Activated CD4-positive, alpha-beta T cell treated with anti-CD3 and anti-CD28 coated beads, Interleukin-2, amount 10 ng/mL, durations not matched to agents 7 days and 5 days (primary cell): ENCODE measurements at regions of chr19 and their contacts with region 1.

Region 1: GRCh38 chr19:41353466-41354342 is at the start of gene TGFB1:
- DNase-seq: peak; percentile 92
- H3K4me3 Mint-ChIP-seq: peak within 1 kb of the TSS; percentile 99
- H3K27ac Mint-ChIP-seq: peak within 1 kb of the TSS; percentile 95
- H3K4me1 Mint-ChIP-seq: peaks cover 64% of the 10 kb centered on the region
- H3K27me3 Mint-ChIP-seq: no peaks in the 10 kb centered on the region
- total RNA-seq, gene TGFB1: 194 TPM

Region 2: DNA sequence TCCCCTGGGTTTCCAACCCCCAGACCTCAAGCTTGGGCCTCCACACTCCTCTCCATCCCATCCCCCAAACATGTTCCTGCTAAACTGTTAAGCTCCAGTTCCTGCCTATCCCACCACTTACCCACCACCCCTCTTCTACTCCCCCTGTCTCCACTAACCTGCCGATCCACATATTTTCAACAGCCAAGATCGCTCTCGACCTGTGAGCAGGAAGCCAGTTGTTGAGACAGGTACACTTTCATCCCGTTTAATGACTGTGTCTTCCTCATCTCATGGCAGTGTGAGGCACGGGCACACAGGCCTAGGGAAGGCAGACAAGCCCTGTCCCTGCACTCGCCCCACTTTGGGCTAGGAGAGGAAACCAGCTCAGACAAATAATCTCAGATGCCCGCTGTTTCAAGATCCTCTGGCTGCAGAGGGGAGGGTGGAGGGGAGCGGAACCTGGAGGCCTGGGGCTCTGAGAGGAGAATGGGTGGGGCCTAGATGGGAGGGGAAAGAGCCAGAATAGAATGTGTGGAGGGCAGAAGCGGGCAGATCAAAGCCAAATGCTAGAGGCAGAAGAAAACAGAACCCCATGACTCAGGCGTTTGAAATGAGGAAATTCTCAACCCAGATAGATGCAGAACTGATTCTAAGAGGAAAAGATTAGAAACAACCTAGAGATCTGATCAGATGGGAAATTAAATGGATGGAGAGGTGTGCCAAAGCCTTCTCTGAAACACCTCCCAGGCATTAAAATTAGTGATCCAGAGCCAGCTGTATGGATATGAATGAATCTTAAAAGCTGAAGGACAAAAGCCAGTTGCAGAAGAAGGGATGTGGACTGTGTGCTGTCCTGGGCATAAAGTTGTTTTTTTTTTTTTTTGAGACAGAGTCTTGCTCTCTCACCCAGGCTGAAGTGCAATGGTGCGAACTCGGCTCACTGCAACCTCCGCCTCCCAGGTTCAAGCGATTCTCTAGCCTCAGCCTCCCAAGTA is 177.6 kb before region 1 on chr19:
- CTCF ChIA-PET with region 1: no interaction called
- POLR2A ChIA-PET with region 1: no interaction called
- DNase-seq: peak; percentile 74
- H3K4me3 Mint-ChIP-seq: peak overlapping the region; percentile 60
- H3K27ac Mint-ChIP-seq: peak overlapping the region; percentile 84
- H3K4me1 Mint-ChIP-seq: peaks cover 24% of the 10 kb centered on the region
- H3K27me3 Mint-ChIP-seq: no peaks in the 10 kb centered on the region

Region 3: GRCh38 chr19:41308392-41309179 is 45.1 kb before region 1 on chr19:
- CTCF ChIA-PET with region 1: interaction called, 14 read pairs
- POLR2A ChIA-PET with region 1: interaction called, 3 read pairs
- DNase-seq: peak; percentile 93
- H3K4me3 Mint-ChIP-seq: peak overlapping the region; percentile 94
- H3K27ac Mint-ChIP-seq: peak overlapping the region; percentile 99
- H3K4me1 Mint-ChIP-seq: peaks cover 87% of the 10 kb centered on the region
- H3K27me3 Mint-ChIP-seq: no peaks in the 10 kb centered on the region

Region 4: GRCh38 chr19:41341669-41342490 is 11.8 kb before region 1 on chr19:
- CTCF ChIA-PET with region 1: interaction called, 15 read pairs
- POLR2A ChIA-PET with region 1: no interaction called
- DNase-seq: no peak
- H3K4me3 Mint-ChIP-seq: peak overlapping the region; percentile 27
- H3K27ac Mint-ChIP-seq: peak overlapping the region; percentile 46
- H3K4me1 Mint-ChIP-seq: peaks cover 55% of the 10 kb centered on the region
- H3K27me3 Mint-ChIP-seq: no peaks in the 10 kb centered on the region

Region 5: DNA sequence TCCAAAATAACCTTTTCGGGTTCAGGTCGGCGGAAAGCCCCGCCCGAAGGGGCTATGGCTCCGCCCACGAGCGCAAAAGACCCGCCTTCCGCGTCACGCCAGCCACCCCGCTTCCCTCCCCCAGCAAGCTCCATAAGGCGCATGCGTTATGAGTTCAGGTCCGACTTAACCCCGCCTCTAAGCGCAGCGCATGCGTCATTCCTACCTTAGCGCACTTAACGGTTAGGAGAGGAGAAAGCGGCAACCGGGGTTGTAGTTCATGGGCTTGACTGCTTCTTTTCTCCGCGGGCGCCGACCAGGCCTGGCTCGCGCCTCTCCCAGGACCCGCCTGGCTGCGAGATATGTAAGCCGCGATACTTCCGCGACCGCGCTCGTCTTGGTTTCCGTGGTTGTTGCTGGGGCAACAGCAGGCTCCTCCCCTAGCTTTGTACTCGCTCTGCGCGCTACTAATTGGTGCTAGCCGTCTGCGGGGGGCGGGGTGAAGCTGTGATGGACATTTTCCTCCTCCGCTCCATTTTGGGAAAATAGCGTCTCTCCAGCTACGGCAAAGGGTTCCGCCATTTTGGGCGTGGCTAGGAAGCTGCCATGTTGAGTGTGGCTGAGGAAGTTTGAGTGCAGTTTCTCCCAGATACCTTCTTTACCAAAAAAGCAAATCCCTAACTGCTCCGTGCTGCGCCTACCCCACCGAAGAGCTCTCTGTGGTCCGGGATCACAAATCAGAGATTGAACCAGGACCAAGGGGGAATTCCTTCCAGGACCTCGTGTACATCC is 10.2 kb after region 1 on chr19 and contains the start of gene B9D2:
- CTCF ChIA-PET with region 1: interaction called, 31 read pairs
- POLR2A ChIA-PET with region 1: interaction called, 5 read pairs
- DNase-seq: peak; percentile 99
- H3K4me3 Mint-ChIP-seq: peak within 1 kb of the TSS; percentile 95
- H3K27ac Mint-ChIP-seq: peak within 1 kb of the TSS; percentile 99
- H3K4me1 Mint-ChIP-seq: peaks cover 41% of the 10 kb centered on the region
- H3K27me3 Mint-ChIP-seq: no peaks in the 10 kb centered on the region
- total RNA-seq, gene B9D2: 11.6 to 11.7 TPM

Region 6: GRCh38 chr19:41426952-41427646 is 73.4 kb after region 1 on chr19 and contains the start of gene B3GNT8:
- CTCF ChIA-PET with region 1: no interaction called
- POLR2A ChIA-PET with region 1: no interaction called
- DNase-seq: peak; percentile 51
- H3K4me3 Mint-ChIP-seq: peak within 1 kb of the TSS; percentile 73
- H3K27ac Mint-ChIP-seq: peak within 1 kb of the TSS; percentile 78
- H3K4me1 Mint-ChIP-seq: peaks cover 42% of the 10 kb centered on the region
- H3K27me3 Mint-ChIP-seq: no peaks in the 10 kb centered on the region
- total RNA-seq, gene B3GNT8: 2.1 to 2.2 TPM